ENCODE measurements at regions of chr3 and their contacts with region 1.

Region 1: DNA sequence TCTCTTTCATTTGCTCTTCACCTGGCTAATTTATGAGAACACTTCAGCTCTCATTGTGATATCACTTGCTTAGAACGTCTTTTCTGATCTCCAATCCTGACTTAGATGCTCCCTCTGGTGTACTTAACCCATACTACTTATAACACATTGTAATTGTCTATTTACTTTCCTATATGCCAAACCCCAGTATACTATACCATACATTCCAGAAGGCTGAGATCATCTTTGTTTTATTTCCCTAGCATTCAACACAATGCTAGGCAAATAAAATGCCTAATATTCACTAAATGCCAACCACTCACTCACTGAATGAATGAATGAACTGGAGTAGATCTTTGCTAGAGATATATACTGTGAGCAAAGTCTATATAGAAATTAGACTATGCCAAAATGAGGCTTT is 27.1 kb upstream of the PEX5L start:
- DNase-seq: no peak
- H3K4me3 ChIP-seq: no peak overlapping the region
- H3K27ac ChIP-seq: no peak overlapping the region
- H3K4me1 ChIP-seq: no peaks in the 10 kb centered on the region
- H3K27me3 ChIP-seq: no peaks in the 10 kb centered on the region
- CTCF ChIP-seq: no peak
- POLR2A ChIP-seq: no peak

Region 2: GRCh38 chr3:178971614-178972013 is 1092.2 kb before region 1 on chr3:
- intact Hi-C with region 1: loop called (anchors 10 kb)
- DNase-seq: no peak
- H3K4me3 ChIP-seq: no peak overlapping the region
- H3K27ac ChIP-seq: no peak overlapping the region
- H3K4me1 ChIP-seq: peaks cover 5% of the 10 kb centered on the region
- H3K27me3 ChIP-seq: no peaks in the 10 kb centered on the region
- CTCF ChIP-seq: no peak
- POLR2A ChIP-seq: no peak